GM12878 (cell line): ENCODE measurements at regions of chr3 and their contacts with region 1.

Region 1: DNA sequence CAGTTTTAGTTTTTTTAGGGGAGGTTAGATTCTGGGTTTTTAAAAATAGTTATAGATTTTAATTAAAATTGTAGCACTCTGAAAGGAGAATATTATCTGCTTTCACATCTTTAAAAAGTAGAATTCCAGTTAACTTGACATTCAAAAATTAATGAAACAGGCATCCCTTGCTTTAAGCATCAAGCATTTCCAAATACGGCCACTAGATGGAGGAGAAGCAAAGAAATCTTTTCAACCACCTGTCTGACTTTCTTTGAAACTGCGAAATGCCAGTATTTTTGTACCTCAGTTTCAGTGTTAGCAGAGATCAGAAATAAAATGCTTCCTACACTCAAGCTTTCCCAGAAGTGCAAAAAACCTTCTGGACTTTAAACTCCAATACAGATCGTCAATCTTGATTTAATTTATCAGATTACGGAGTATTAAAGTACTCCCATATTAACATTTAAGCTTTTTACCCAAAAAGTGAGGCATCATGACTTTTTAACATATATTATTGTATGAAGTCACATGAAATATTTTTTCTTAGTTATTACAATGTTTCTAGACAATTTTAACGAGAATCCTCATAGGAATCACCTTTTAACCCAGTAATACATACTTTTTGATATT is 153.3 kb downstream of the P3H2 start:
- DNase-seq: no peak
- ATAC-seq: peak; percentile 89
- H3K4me3 ChIP-seq: no peak overlapping the region
- H3K27ac ChIP-seq: no peak overlapping the region
- H3K4me1 ChIP-seq: no peaks in the 10 kb centered on the region
- H3K27me3 ChIP-seq: no peaks in the 10 kb centered on the region
- CTCF ChIP-seq: peak; percentile 75 to 81 (median 81)
- EP300 ChIP-seq: no peak
- POLR2A ChIP-seq: no peak
- RAD21 ChIP-seq: peak; percentile 93

Region 2: DNA sequence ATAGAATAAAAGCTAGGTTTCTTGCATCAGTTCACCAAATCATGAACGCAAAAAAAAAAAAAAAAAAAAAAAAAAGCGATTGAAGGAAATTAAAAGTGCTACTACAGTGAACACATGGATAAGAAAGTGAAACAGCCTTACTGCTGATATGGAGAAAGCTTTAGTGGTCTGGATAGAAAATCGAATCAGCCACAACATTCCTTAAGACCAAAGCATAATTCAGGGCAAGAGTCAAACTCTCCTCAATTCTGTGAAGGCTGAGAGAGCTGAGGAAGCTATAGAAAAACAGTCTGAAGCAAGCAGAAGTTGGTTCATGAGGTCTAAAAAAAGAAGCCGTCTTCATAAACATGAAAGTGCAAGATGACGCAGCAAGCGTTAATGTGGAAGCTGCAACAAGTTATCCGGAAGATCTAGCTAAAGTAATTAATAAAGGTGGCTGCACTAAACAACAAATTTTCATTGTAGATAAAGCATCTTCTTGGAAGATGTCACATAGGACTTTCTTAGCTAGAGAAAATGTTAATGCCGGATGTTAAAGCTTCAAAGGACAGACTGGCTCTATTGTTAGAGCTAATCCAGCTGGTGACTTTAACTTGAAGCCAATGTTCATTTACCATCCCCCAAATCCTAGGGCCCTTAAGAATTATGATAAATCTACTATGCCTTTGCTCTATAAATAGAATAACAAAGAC is 134.1 kb after region 1 on chr3:
- CTCF ChIA-PET with region 1: no interaction called
- POLR2A ChIA-PET with region 1: no interaction called
- RAD21 ChIA-PET with region 1: interaction called, 3 read pairs
- SMC1A ChIA-PET with region 1: no interaction called
- in situ Hi-C with region 1: no loop called
- intact Hi-C with region 1: loop called (anchors 5 kb)
- DNase-seq: no peak
- ATAC-seq: peak; percentile 42
- H3K4me3 ChIP-seq: no peak overlapping the region
- H3K27ac ChIP-seq: peak overlapping the region; percentile 41
- H3K4me1 ChIP-seq: no peaks in the 10 kb centered on the region
- H3K27me3 ChIP-seq: no peaks in the 10 kb centered on the region
- CTCF ChIP-seq: no peak
- EP300 ChIP-seq: no peak
- POLR2A ChIP-seq: no peak
- RAD21 ChIP-seq: no peak

Region 3: GRCh38 chr3:190197346-190197763 is 230.0 kb after region 1 on chr3:
- CTCF ChIA-PET with region 1: interaction called, 36 read pairs
- POLR2A ChIA-PET with region 1: interaction called, 3 read pairs
- RAD21 ChIA-PET with region 1: interaction called, 27 read pairs
- SMC1A ChIA-PET with region 1: interaction called, 41 read pairs
- in situ Hi-C with region 1: loop called (anchors 5 kb)
- intact Hi-C with region 1: loop called (anchors 1 kb)
- DNase-seq: no peak
- ATAC-seq: peak; percentile 50
- H3K4me3 ChIP-seq: no peak overlapping the region
- H3K27ac ChIP-seq: no peak overlapping the region
- H3K4me1 ChIP-seq: no peaks in the 10 kb centered on the region
- H3K27me3 ChIP-seq: no peaks in the 10 kb centered on the region
- CTCF ChIP-seq: no peak
- EP300 ChIP-seq: no peak
- POLR2A ChIP-seq: no peak
- RAD21 ChIP-seq: no peak

Region 4: GRCh38 chr3:190321789-190322603 is 354.6 kb after region 1 on chr3 and contains the start of gene CLDN1:
- CTCF ChIA-PET with region 1: interaction called, 15 read pairs
- POLR2A ChIA-PET with region 1: no interaction called
- RAD21 ChIA-PET with region 1: interaction called, 3 read pairs
- SMC1A ChIA-PET with region 1: interaction called, 8 read pairs
- in situ Hi-C with region 1: loop called (anchors 10 kb)
- intact Hi-C with region 1: no loop called
- DNase-seq: no peak
- ATAC-seq: peak; percentile 83
- H3K4me3 ChIP-seq: peak within 1 kb of the TSS; percentile 61; the same call in 1 of the 2 replicates
- H3K27ac ChIP-seq: no peak within 1 kb of the TSS
- H3K4me1 ChIP-seq: no peaks in the 10 kb centered on the region
- H3K27me3 ChIP-seq: peaks cover 2 to 8% of the 10 kb centered on the region in 2 experiments; a peak in 3 of 4 replicates
- CTCF ChIP-seq: peak; percentile 70 to 74 (median 72); a peak in 5 of 6 replicates
- EP300 ChIP-seq: no peak
- POLR2A ChIP-seq: no peak
- RAD21 ChIP-seq: peak; percentile 78
- polyA plus RNA-seq, gene CLDN1: 3.4 to 3.9 TPM

Region 5: DNA sequence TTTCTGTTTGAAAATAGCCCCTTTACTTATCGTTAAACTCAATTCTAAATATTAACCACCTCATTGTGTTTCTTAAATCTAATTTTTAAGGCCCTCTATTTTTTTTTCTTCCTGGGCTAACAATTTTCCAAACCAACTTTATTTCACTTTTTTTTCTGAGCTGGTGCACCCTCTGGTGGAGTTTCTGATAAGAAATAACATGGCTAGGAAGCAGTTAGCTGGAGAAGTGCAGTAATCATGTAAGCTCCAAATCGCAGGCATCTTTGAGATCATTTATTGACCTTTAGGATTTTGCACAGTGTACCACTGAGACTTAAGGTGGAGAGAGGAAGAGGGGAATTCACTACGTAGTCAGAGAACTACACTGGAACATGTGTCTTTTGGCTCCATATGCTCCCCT is 475.9 kb after region 1 on chr3:
- CTCF ChIA-PET with region 1: interaction called, 25 read pairs
- POLR2A ChIA-PET with region 1: no interaction called
- RAD21 ChIA-PET with region 1: no interaction called
- SMC1A ChIA-PET with region 1: interaction called, 28 read pairs
- in situ Hi-C with region 1: no loop called
- intact Hi-C with region 1: loop called (anchors 5 kb)
- DNase-seq: no peak
- ATAC-seq: no peak
- H3K4me3 ChIP-seq: no peak overlapping the region
- H3K27ac ChIP-seq: no peak overlapping the region
- H3K4me1 ChIP-seq: no peaks in the 10 kb centered on the region
- H3K27me3 ChIP-seq: no peaks in the 10 kb centered on the region
- CTCF ChIP-seq: peak in 1 of 3 experiments; percentile 6; a peak in 1 of 6 replicates
- EP300 ChIP-seq: no peak
- POLR2A ChIP-seq: no peak
- RAD21 ChIP-seq: no peak